Activated CD4-positive, alpha-beta memory T cell treated with anti-CD3 and anti-CD28 coated beads for 36 hours (primary cell): ENCODE measurements at regions of chr6 and their contacts with region 1.

Region 1: GRCh38 chr6:52399511-52400312 is 20.4 kb upstream of the EFHC1 start:
- DNase-seq: peak; percentile 39
- H3K4me3 Mint-ChIP-seq: no peak overlapping the region
- H3K27ac Mint-ChIP-seq: peak overlapping the region; percentile 40
- H3K4me1 Mint-ChIP-seq: peaks cover 63% of the 10 kb centered on the region
- H3K27me3 Mint-ChIP-seq: no peaks in the 10 kb centered on the region

Region 2: DNA sequence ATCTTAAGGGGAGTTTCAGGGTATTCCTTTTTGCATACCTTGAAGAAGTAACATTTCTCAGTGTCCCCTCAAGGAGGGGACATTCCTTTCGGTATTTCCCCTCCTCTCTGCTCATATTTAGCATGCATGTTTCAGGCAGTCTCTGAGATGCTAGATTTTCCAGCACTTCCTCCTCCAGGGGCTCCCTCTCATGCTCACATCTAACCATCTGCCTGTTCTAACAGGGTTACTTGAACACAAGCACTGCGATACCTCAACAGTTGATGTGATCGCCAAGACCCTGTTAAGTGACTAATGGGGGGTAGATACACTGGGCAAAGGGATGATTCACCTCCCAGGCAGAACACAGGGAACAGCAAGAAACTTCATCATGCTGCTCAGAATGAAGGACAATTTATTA is 102.3 kb before region 1 on chr6:
- CTCF ChIA-PET with region 1: interaction called, 8 read pairs
- POLR2A ChIA-PET with region 1: interaction called, 3 read pairs
- intact Hi-C with region 1: loop called (anchors 2 kb)
- DNase-seq: peak; percentile 23
- H3K4me3 Mint-ChIP-seq: peak overlapping the region; percentile 64
- H3K27ac Mint-ChIP-seq: peak overlapping the region; percentile 88
- H3K4me1 Mint-ChIP-seq: peaks cover 41% of the 10 kb centered on the region
- H3K27me3 Mint-ChIP-seq: no peaks in the 10 kb centered on the region

Region 3: GRCh38 chr6:52377538-52378221 is 22.0 kb before region 1 on chr6:
- CTCF ChIA-PET with region 1: interaction called, 5 read pairs
- POLR2A ChIA-PET with region 1: no interaction called
- intact Hi-C with region 1: loop called (anchors 2 kb)
- DNase-seq: no peak
- H3K4me3 Mint-ChIP-seq: no peak overlapping the region
- H3K27ac Mint-ChIP-seq: no peak overlapping the region
- H3K4me1 Mint-ChIP-seq: peaks cover 61% of the 10 kb centered on the region
- H3K27me3 Mint-ChIP-seq: no peaks in the 10 kb centered on the region